Head of caudate nucleus (tissue), 42 donors: ENCODE measurements at regions of chr7 and their contacts with region 1.

Region 1: GRCh38 chr7:95686109-95686508 is 86.2 kb upstream of the DYNC1I1 start:
- DNase-seq: peak; percentile 12 to 91 (median 70)

Region 2: DNA sequence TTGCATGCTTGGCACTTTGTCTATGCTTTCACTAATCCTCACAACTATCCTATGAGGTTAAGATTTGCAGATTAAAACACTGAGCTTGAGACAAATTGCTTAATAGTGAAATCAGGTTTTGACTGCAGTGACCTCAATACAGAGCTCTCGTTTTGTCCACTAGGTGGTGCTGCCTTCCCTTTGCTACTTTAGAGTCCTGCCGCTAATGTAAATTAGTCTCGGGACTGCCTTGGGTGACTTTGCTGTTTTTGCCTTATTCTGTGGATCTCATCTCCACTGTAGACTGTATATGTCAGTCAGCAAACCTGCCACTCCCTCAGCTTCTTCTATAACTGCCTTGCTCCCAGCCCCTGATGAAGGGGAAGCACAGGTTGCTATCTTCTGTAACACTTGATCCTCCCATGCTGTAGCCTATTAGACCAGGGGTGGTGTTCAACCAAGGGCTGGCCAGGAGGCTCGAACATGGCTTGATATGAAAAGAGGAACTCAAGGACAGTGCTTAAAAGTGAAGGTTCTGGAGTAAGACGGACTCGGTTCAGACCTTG is 174.3 kb before region 1 on chr7:
- intact Hi-C with region 1: loop called (anchors 5 kb)
- DNase-seq: peak; percentile 14 to 95 (median 82)

Region 3: GRCh38 chr7:95527033-95527775 is 158.9 kb before region 1 on chr7:
- intact Hi-C with region 1: loop called (anchors 5 kb)
- DNase-seq: peak in 41 of 42 donors; percentile 30 to 90 (median 74)

Region 4: GRCh38 chr7:95545078-95545498 is 141.0 kb before region 1 on chr7:
- intact Hi-C with region 1: loop called (anchors 5 kb)
- DNase-seq: peak in 30 of 42 donors; percentile 31 to 85 (median 64)